ENCODE measurements at regions of chr10 and their contacts with region 1.

Region 1: DNA sequence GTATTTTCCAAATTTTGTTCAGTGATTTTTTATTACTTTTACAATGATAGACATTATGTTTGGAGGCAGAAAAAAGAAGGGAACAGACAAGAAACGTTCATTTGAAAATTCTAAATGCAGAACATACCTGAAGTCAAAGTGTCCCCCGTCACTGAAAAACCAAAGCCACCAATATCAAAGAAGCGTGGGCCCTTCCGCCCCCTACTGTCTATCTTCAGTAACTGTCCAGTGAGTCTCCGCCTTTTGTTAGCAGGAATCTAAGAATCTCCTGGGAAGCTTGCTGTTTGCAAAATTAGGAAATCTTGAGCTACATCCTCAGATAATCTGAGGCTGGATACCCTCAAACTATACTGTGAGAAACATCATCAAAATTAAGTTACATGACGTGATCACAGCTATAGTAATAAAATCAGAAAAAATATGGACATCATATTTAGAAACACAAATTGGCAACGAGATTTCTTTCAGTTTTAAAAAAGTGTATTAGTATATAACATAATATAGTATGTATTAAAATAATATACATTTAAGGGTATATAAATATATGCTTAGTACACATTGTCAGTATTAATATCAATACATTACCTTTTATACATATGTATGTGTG is 169.3 kb upstream of the AKR1E2 start:
- DNase-seq: peak; percentile 26 to 56 (median 39)
- H3K4me3 ChIP-seq: no peak overlapping the region
- H3K27ac ChIP-seq: no peak overlapping the region
- H3K4me1 ChIP-seq: peaks cover 1% of the 10 kb centered on the region
- H3K27me3 ChIP-seq: no peaks in the 10 kb centered on the region
- CTCF ChIP-seq: peak; percentile 70 to 80 (median 79)
- EP300 ChIP-seq: no peak
- POLR2A ChIP-seq: no peak

Region 2: GRCh38 chr10:3239066-3239919 is 1417.4 kb before region 1 on chr10:
- intact Hi-C with region 1: loop called in 3 of 4 experiments (anchors 10 kb)
- DNase-seq: peak; percentile 55 to 79 (median 74)
- H3K4me3 ChIP-seq: no peak overlapping the region
- H3K27ac ChIP-seq: no peak overlapping the region
- H3K4me1 ChIP-seq: no peaks in the 10 kb centered on the region
- H3K27me3 ChIP-seq: no peaks in the 10 kb centered on the region
- CTCF ChIP-seq: peak; percentile 68 to 81 (median 74)
- EP300 ChIP-seq: no peak
- POLR2A ChIP-seq: peak; percentile 7

Region 3: GRCh38 chr10:3248888-3249758 is 1407.6 kb before region 1 on chr10:
- intact Hi-C with region 1: loop called in 1 of 4 experiments (anchors 10 kb)
- DNase-seq: peak in 1 of 5 donors; percentile 37
- H3K4me3 ChIP-seq: no peak overlapping the region
- H3K27ac ChIP-seq: peak overlapping the region in 1 of 2 donors; percentile 8
- H3K4me1 ChIP-seq: no peaks in the 10 kb centered on the region
- H3K27me3 ChIP-seq: no peaks in the 10 kb centered on the region
- CTCF ChIP-seq: no peak
- EP300 ChIP-seq: no peak
- POLR2A ChIP-seq: no peak

Region 4: GRCh38 chr10:4688601-4689000 is 31.9 kb after region 1 on chr10:
- intact Hi-C with region 1: no loop called
- DNase-seq: no peak
- H3K4me3 ChIP-seq: no peak overlapping the region
- H3K27ac ChIP-seq: no peak overlapping the region
- H3K4me1 ChIP-seq: no peaks in the 10 kb centered on the region
- H3K27me3 ChIP-seq: no peaks in the 10 kb centered on the region
- CTCF ChIP-seq: no peak
- EP300 ChIP-seq: no peak
- POLR2A ChIP-seq: no peak

Region 5: DNA sequence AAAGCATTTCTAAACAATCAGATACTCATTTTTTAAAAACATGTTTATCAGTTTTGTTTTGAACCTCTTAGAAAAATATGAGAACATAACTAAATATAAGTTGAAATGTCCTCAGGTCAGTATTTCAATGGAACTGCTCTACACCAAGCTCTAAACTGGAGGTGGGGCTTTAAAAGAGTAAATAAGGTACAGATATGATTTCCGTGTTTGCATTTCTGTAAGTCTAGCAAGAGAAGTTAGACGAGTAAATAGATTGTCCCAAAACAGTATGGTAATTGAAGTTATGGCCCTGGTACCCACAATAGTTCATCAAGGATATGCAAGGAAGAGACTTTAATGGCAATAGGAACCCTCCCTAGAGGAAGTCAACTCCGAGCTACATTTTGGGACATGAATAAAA is 54.2 kb after region 1 on chr10:
- intact Hi-C with region 1: loop called in 1 of 4 experiments (anchors 1 kb)
- DNase-seq: no peak
- H3K4me3 ChIP-seq: no peak overlapping the region
- H3K27ac ChIP-seq: no peak overlapping the region
- H3K4me1 ChIP-seq: no peaks in the 10 kb centered on the region
- H3K27me3 ChIP-seq: no peaks in the 10 kb centered on the region
- CTCF ChIP-seq: no peak
- EP300 ChIP-seq: no peak
- POLR2A ChIP-seq: no peak

Region 6: DNA sequence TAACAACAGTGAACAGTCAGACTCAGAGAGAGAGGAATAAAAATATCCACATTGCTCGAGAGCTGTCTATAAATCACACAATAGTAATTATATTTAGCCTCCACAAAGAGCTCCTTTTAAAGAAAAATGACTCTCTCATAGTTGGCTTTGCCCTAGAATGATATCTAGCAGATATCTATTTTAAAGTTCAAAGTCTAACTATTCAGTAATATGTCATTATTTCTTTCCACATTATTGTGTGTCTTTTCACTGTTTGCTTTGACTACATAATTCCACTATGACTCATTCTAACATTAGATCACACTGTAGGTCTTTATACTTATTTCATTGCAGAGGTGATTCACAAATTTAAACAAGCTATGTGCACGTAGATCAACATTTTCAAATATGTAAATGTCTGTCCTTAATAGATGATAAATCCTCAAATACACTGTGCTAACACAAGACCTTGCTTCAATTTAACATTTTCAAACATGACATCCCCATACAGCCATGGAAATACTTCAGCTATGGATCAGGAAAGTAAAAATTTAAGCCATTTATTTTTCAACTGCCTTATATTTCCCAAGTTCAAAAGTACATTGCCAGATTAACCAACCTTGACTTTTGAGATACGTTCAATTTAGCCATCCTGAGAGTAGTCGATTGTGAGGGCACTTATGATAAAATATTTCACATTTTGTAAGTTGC is 69.4 kb after region 1 on chr10:
- intact Hi-C with region 1: no loop called
- DNase-seq: no peak
- H3K4me3 ChIP-seq: no peak overlapping the region
- H3K27ac ChIP-seq: no peak overlapping the region
- H3K4me1 ChIP-seq: no peaks in the 10 kb centered on the region
- H3K27me3 ChIP-seq: no peaks in the 10 kb centered on the region
- CTCF ChIP-seq: no peak
- EP300 ChIP-seq: no peak
- POLR2A ChIP-seq: no peak